ENCODE measurements at regions of chr12 and their contacts with region 1.

Region 1: GRCh38 chr12:66352197-66352596 is 49.9 kb downstream of the HELB start:
- DNase-seq: peak; percentile 59 to 64
- H3K4me3 ChIP-seq: no peak overlapping the region
- H3K4me3 Mint-ChIP-seq: no peak overlapping the region
- H3K27ac Mint-ChIP-seq: no peak overlapping the region
- H3K4me1 ChIP-seq: no peaks in the 10 kb centered on the region
- H3K4me1 Mint-ChIP-seq: no peaks in the 10 kb centered on the region
- H3K27me3 ChIP-seq: no peaks in the 10 kb centered on the region
- H3K27me3 Mint-ChIP-seq: no peaks in the 10 kb centered on the region
- CTCF ChIP-seq: peak; percentile 68 to 75

Region 2: DNA sequence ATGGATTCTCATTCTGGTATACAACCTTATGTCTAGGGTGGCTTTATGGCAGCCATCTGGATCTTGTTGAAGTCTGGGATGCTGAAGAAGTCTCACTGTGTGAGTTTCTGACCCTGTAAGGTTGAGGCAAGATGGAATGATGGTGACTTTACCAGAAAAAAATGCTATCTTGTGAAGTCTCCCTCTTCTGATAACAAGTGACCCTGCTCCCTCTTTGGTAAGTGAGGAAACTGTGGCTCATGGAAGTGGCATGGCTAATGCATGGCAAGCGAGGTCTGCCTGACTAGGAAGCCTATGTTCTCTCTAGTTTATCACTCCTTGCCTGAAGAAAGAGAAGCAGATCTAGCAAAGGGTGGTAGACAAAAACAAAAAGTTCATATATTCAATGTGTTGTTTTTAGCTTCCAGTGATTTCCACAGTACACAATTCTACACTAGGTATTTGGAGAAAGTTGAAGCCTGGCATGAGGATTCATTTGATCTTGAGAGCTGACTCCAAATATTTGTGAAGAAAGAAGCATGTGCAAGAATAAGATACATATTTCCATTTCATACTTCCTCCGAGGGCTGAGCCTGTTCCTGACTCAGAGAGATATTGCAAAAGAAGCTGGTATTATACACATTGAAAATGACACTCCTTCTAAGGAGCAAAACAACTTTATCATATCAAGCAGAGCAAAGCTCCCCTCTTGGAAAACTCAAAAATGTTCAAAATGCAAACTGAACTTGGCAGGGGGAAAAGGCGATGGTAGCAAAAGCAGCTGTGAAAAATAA is 13.7 kb after region 1 on chr12:
- CTCF ChIA-PET with region 1: interaction called, 11 read pairs
- POLR2A ChIA-PET with region 1: no interaction called
- intact Hi-C with region 1: no loop called
- DNase-seq: no peak
- H3K4me3 ChIP-seq: no peak overlapping the region
- H3K4me3 Mint-ChIP-seq: no peak overlapping the region
- H3K27ac Mint-ChIP-seq: no peak overlapping the region
- H3K4me1 ChIP-seq: peaks cover 29% of the 10 kb centered on the region
- H3K4me1 Mint-ChIP-seq: peaks cover 24% of the 10 kb centered on the region
- H3K27me3 ChIP-seq: no peaks in the 10 kb centered on the region
- H3K27me3 Mint-ChIP-seq: peaks cover 2% of the 10 kb centered on the region
- CTCF ChIP-seq: no peak

Region 3: DNA sequence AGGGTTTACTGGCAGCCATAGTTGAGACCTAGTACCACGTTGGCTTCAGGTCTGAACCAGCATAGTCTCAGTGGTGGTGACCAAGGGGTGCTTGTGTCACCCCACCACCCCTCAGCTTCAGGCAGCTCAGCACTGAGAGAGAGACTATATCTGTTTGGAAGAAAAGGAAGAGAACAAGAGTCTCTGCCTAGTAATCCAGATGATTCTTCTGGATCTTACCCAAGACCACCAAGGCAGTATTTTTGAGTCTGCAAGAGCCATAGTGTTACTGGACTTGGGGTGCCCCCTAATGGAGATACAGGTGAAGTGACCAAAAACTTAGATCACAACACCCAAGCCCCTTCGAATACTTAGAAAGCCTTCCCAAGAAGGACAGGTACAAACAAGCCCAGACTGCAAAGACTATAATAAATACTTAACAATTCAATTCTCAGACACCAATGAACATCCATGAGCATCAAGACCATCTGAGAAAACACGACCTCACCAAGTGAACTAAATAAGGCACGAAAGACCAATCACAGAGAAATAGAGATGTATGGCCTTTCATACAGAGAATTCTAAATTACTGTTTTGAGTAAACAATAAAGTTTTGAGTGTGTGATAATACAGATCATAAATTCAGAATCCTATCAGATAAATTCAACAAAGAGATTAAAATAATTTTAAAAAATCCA is 57.1 kb after region 1 on chr12:
- CTCF ChIA-PET with region 1: interaction called, 5 read pairs
- POLR2A ChIA-PET with region 1: no interaction called
- intact Hi-C with region 1: loop called (anchors 1 kb)
- DNase-seq: peak; percentile 45 to 66
- H3K4me3 ChIP-seq: no peak overlapping the region
- H3K4me3 Mint-ChIP-seq: no peak overlapping the region
- H3K27ac Mint-ChIP-seq: no peak overlapping the region
- H3K4me1 ChIP-seq: no peaks in the 10 kb centered on the region
- H3K4me1 Mint-ChIP-seq: no peaks in the 10 kb centered on the region
- H3K27me3 ChIP-seq: no peaks in the 10 kb centered on the region
- H3K27me3 Mint-ChIP-seq: peaks cover 5% of the 10 kb centered on the region
- CTCF ChIP-seq: peak; percentile 65

Region 4: DNA sequence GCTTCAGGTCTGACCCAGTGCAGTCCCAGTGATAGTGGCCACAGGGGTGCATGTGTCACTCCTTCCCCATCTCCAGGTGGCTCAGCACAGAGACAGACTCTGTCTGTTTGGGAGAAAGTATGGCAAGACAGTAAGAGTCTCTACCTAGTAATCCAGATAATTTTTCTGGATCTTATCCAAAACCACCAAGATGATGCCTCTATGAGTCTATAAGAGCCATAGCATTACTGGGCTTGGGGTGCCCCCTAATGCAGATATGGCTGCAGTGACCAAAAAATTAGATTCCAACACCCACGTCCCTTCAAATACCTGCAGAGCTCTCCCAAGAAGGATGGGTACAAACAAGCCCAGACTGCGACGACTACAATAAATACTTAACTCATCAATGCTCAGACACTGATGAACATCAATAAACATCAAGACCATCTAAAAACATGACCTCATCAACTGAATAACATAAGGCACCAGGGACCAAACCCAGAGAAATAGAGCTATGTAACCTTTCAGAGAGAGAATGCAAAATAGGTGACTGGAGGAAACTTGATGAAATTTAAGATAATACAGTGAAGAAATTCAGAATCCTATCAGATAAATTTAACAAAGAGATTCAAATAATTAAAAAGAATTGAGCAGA is 203.0 kb after region 1 on chr12:
- CTCF ChIA-PET with region 1: no interaction called
- POLR2A ChIA-PET with region 1: no interaction called
- intact Hi-C with region 1: loop called (anchors 5 kb)
- DNase-seq: peak in 1 of 2 experiments; percentile 6
- H3K4me3 ChIP-seq: no peak overlapping the region
- H3K4me3 Mint-ChIP-seq: no peak overlapping the region
- H3K27ac Mint-ChIP-seq: no peak overlapping the region
- H3K4me1 ChIP-seq: no peaks in the 10 kb centered on the region
- H3K4me1 Mint-ChIP-seq: no peaks in the 10 kb centered on the region
- H3K27me3 ChIP-seq: no peaks in the 10 kb centered on the region
- H3K27me3 Mint-ChIP-seq: peaks cover 10% of the 10 kb centered on the region
- CTCF ChIP-seq: no peak

Region 5: DNA sequence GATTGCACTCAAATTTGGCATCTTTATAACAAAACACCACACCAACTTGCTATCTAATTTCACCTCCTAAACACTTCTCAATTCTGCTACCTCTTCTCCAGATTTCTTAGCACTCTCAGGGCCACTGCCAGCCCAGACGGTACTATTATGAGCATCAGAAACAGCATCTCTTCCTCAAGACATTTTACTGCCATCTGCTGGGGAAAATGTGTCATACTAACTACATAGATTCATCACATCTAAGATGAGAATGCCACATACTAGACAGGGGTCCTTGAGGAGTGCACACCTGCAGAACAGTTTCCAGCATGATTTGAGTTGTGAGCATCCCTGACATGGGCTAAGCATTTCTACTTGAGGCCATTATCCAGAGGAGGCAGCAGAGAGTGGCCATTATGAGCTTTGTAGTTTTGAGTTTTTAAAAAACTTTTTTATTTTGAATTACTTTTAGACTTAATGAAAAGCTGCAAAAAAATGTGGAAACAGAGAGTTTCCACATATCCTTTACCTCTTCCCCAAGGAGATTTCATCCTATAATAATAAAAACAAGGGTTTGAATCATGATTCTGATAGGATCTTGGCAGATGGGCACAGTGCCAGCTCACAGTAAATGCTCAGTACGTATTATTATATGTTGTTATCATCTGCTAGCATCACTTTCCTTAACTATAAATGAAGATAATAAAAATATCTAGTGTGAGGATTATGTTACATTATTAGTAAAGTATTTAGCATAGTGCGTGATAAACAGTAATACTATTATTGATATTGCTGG is 341.9 kb after region 1 on chr12:
- CTCF ChIA-PET with region 1: no interaction called
- POLR2A ChIA-PET with region 1: no interaction called
- intact Hi-C with region 1: loop called (anchors 1 kb)
- DNase-seq: peak in 1 of 2 experiments; percentile 47
- H3K4me3 ChIP-seq: no peak overlapping the region
- H3K4me3 Mint-ChIP-seq: no peak overlapping the region
- H3K27ac Mint-ChIP-seq: no peak overlapping the region
- H3K4me1 ChIP-seq: no peaks in the 10 kb centered on the region
- H3K4me1 Mint-ChIP-seq: no peaks in the 10 kb centered on the region
- H3K27me3 ChIP-seq: no peaks in the 10 kb centered on the region
- H3K27me3 Mint-ChIP-seq: peaks cover 10% of the 10 kb centered on the region
- CTCF ChIP-seq: peak; percentile 43 to 50

Region 6: DNA sequence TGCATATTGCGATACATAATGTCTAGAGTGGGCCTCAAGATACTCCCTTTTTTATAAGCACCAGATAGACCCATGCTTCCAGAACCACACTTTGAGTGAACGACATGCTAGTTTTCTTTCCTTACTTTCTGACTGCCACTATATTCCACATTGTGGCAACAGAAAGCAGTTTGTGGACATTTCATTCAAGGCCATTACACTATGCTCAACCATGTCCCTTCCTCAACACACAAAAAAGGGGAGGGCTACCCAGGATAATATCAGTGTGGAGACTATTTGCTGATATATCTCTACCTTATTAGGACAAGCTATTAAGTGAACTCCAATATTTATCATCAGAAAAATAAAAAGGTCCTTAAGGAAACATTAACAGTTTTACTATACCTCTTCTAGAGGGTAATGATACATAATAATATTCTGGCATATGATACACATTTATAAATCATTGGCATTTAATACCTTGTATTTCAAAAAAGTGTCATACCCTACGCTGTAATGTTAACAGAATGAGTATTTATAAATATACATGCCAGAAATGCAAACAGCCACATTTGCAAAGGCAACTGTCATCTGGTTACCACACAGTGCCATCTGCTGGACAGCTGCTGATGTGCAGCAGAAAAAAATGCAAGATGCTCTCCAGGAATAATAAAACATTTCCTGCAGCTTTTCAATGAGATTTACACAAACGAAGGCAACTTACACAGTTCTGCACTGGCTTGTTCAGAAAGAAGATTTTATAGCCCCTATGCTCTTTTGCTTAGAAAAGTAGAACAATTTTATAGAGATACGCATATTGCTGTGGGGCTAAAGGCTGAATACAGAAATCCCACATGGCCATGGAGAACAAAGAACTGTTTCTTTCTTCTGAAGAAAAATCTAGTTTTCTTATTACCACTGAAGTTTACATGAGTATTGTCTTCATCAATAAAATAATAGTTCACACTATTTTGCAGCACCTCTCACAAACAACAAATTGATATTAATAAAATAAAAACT is 508.9 kb after region 1 on chr12:
- CTCF ChIA-PET with region 1: no interaction called
- POLR2A ChIA-PET with region 1: no interaction called
- intact Hi-C with region 1: loop called (anchors 1 kb)
- DNase-seq: peak; percentile 48 to 64
- H3K4me3 ChIP-seq: no peak overlapping the region
- H3K4me3 Mint-ChIP-seq: no peak overlapping the region
- H3K27ac Mint-ChIP-seq: no peak overlapping the region
- H3K4me1 ChIP-seq: no peaks in the 10 kb centered on the region
- H3K4me1 Mint-ChIP-seq: no peaks in the 10 kb centered on the region
- H3K27me3 ChIP-seq: no peaks in the 10 kb centered on the region
- H3K27me3 Mint-ChIP-seq: peaks cover 11% of the 10 kb centered on the region
- CTCF ChIP-seq: peak; percentile 85 to 88

Measured in Caco-2 (cell line).